ENCODE measurements at regions of chr3 and their contacts with region 1.

Region 1: GRCh38 chr3:23916886-23917678 is at the starts of genes NKIRAS1 and RPL15:
- DNase-seq: peak; percentile 73
- H3K4me3 ChIP-seq: peak within 1 kb of the TSS; percentile 95
- CTCF ChIP-seq: peak; percentile 54

Region 2: DNA sequence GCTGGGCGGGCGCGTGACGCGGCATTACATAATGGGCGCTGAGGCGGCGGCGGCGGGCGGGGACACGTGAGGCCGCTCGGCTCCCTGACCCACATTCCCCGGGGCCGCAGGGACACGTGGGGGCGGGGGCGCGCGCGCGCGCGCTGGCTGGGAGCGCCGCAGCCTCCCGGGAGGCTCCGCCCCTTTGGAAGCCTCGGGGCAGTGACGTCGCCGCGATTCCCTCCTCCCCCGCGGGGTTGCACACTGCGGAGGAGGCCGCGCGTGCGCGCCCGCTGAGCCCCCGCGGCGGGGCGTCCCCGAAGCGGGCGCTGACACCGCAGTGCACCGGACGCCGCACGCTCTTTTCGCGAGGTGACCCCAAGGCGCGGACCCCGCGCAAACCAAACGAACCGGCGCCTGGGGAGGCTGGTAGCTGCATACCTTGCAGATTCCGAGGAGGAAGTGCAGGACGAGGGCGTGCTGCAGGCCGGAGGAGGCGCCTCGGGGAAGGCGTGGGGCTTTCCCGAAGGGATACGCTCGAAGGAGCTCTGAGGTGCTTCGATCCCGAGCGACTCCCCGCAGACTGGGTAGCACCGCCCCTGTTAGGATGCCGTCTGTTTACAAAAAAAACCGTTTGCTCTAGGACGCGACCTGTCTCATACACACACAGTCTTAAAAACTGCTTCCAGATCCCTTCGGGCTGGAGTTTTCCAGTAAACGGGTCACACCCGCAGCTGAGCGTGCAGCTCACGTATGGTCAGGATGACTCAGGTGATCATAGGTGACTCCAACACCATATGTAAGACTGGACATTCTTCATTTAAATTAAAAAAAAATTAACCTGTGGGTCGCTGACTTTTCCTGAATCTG is 29.0 kb after region 1 on chr3:
- CTCF ChIA-PET with region 1: interaction called, 5 read pairs
- POLR2A ChIA-PET with region 1: interaction called, 35 read pairs
- DNase-seq: no peak
- H3K4me3 ChIP-seq: peak overlapping the region; percentile 90
- CTCF ChIP-seq: no peak